Heart left ventricle (tissue), 16 donors: ENCODE measurements at regions of chr6 and their contacts with region 1.

Region 1: GRCh38 chr6:122130026-122130348 is 269.5 kb upstream of the HSF2 start:
- DNase-seq: peak in 4 of 5 donors; percentile 31 to 39 (median 38)
- ATAC-seq: peak; percentile 75 to 87 (median 82)
- H3K4me3 ChIP-seq: no peak overlapping the region
- H3K27ac ChIP-seq: peak overlapping the region; percentile 57 to 91 (median 80)
- H3K4me1 ChIP-seq: peaks cover 0 to 23% (median 0%) of the 10 kb centered on the region in 12 donors
- H3K27me3 ChIP-seq: no peaks in the 10 kb centered on the region
- CTCF ChIP-seq: no peak
- POLR2A ChIP-seq: no peak

Region 2: DNA sequence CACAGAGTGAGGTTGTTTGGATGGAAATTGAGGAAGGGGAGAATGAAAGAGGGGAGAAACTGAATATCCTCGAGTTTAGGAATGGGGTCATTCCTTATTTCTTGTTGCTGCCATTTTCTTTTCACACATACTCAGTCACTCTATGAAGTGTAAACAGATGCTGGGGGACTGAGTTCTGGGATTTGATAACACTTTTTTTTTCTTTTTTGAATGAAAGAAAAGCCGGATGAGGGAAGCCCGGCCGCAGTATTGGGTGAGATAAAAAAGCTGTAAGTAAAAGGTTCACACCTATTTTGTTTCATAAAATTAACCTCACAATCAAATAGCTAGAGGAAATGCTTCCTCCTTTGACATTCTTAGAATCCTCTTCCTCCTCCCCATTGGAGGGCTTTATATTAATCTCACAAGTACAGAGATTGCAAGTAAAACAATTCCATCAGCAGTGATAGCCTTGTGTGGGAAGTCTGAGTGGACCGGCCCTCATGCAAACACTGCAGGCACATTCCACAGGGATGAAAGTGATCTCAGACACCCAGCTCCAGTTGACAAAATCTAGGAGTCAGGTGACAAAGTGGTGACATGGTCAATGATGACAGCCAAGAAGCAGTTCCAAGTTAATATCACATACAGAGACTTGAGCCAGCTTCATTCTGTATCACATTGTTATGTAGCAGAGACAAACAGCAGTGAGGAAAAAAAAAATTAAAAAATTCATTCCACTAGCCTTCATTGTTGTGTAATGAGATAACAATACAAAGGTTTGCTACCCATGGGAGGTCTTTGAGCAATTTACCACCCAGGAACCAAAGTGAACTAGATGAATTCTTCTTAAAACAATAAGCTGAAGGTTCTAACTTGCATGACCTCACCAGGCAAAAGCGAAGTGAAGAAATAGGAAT is 121.6 kb before region 1 on chr6:
- intact Hi-C with region 1: loop called in 2 of 10 experiments (anchors 1 to 2 kb)
- DNase-seq: peak in 4 of 5 donors; percentile 59 to 68 (median 68)
- ATAC-seq: peak; percentile 96 to 99 (median 98)
- H3K4me3 ChIP-seq: no peak overlapping the region
- H3K27ac ChIP-seq: peak overlapping the region; percentile 52 to 88 (median 66)
- H3K4me1 ChIP-seq: peaks cover 0 to 19% (median 10%) of the 10 kb centered on the region in 12 donors
- H3K27me3 ChIP-seq: no peaks in the 10 kb centered on the region
- CTCF ChIP-seq: no peak
- POLR2A ChIP-seq: no peak

Region 3: DNA sequence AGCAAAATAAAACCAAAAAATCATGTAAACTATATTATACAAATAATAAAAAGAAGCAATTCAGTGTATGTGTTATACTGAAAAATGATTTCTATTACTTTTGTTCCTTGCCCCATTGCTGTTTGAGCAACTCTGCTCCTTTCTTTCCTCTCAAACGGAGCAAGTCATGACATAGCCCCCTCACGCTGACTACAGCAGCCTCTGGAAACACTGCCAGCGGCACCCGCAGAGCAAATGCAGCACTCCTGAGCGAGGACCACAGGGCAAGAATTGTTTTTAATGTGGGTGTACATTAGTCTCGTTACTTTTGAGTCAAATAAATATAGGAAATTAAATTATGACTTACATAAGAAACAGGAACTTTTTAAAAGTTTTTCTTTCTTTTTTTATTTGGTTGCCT is 80.6 kb before region 1 on chr6:
- intact Hi-C with region 1: loop called in 2 of 10 experiments (anchors 5 kb)
- DNase-seq: peak in 3 of 5 donors; percentile 18 to 31 (median 29)
- ATAC-seq: peak in 3 of 4 donors; percentile 64 to 78 (median 74)
- H3K4me3 ChIP-seq: peak overlapping the region in 4 of 12 donors; percentile 1 to 23 (median 16)
- H3K27ac ChIP-seq: peak overlapping the region in 1 of 12 donors; percentile 7
- H3K4me1 ChIP-seq: no peaks in the 10 kb centered on the region
- H3K27me3 ChIP-seq: no peaks in the 10 kb centered on the region
- CTCF ChIP-seq: no peak
- POLR2A ChIP-seq: no peak

Region 4: GRCh38 chr6:122184401-122184827 is 54.4 kb after region 1 on chr6:
- intact Hi-C with region 1: loop called in 1 of 10 experiments (anchors 2 kb)
- DNase-seq: no peak
- ATAC-seq: peak; percentile 51 to 83 (median 74)
- H3K4me3 ChIP-seq: peak overlapping the region in 7 of 12 donors; percentile 22 to 43 (median 34)
- H3K27ac ChIP-seq: no peak overlapping the region
- H3K4me1 ChIP-seq: peaks cover 0 to 10% (median 0%) of the 10 kb centered on the region in 12 donors
- H3K27me3 ChIP-seq: no peaks in the 10 kb centered on the region
- CTCF ChIP-seq: peak; percentile 16 to 61 (median 49)
- POLR2A ChIP-seq: no peak